Gastrocnemius medialis (tissue), 4 donors: ENCODE measurements at regions of chrX and their contacts with region 1.

Region 1: DNA sequence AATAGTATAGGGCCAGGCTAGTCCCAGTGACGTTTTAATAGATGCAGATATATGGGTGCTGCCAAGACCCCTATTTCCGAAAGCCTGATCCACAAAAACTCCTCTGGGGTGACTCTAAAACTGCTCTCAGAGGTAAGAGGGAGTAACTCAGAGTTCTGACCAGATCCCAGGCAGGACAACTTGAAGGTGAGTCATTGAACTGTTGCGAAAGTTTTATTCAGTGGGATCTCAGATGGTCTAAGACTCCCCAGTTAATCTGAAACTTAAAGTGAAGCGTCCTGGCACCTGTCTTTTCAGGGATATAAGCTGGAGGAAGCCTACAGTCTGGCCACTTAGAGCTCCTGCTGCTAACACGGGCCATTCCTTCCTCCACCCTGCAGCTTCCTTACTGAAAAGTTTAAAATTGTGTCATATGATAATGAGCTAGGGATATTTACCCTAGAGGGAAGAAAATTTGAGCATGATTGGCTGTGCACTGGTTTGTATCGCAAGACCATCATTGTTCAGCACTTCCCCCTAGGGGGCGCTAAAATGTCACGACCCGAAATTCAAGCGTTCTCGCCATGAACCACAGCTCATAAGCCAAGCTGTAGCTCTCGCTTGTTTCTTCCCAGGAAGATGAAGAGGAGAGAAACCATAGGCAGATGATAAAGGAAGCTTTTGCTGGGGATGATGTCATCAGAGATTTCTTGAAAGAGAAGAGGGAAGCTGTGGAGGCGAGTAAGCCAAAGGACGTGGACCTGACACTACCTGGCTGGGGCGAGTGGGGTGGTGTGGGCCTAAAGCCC is 19.5 kb downstream of the UTP14A start:
- DNase-seq: peak; percentile 25 to 56
- ATAC-seq: peak; percentile 62 to 93
- H3K4me3 ChIP-seq: no peak overlapping the region
- H3K27ac ChIP-seq: no peak overlapping the region
- H3K4me1 ChIP-seq: no peaks in the 10 kb centered on the region
- H3K27me3 ChIP-seq: no peaks in the 10 kb centered on the region
- CTCF ChIP-seq: peak; percentile 32 to 68 (median 61)
- POLR2A ChIP-seq: no peak

Region 2: GRCh38 chrX:129945146-129945545 is 19.6 kb after region 1 on chrX:
- in situ Hi-C with region 1: no loop called
- intact Hi-C with region 1: no loop called
- DNase-seq: no peak
- ATAC-seq: no peak
- H3K4me3 ChIP-seq: no peak overlapping the region
- H3K27ac ChIP-seq: no peak overlapping the region
- H3K4me1 ChIP-seq: no peaks in the 10 kb centered on the region
- H3K27me3 ChIP-seq: no peaks in the 10 kb centered on the region
- CTCF ChIP-seq: no peak
- POLR2A ChIP-seq: no peak

Region 3: DNA sequence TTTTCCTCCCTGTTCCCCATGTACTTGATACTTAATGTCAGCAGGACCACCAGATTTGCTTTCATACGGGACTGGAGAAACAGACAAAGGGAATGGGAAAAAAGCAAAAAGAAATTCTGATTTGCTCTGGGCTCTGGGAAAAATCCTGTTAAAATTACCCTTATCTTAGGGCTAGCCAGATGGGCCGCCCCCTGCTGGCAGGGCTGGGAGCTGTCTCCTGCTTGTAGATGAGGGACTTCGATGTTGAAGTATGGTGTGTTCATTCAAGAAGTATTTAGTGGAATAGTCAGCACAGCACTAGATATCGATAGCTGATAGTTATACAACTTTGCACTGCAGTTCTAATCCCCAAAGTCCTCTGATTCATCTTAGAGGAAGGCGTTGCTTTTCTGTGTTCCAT is 102.7 kb after region 1 on chrX:
- in situ Hi-C with region 1: no loop called
- intact Hi-C with region 1: loop called (anchors 1 kb)
- DNase-seq: peak in 1 of 2 donors; percentile 19
- ATAC-seq: peak in 1 of 2 donors; percentile 49
- H3K4me3 ChIP-seq: no peak overlapping the region
- H3K27ac ChIP-seq: no peak overlapping the region
- H3K4me1 ChIP-seq: no peaks in the 10 kb centered on the region
- H3K27me3 ChIP-seq: no peaks in the 10 kb centered on the region
- CTCF ChIP-seq: peak; percentile 46 to 77 (median 52)
- POLR2A ChIP-seq: no peak

Region 4: DNA sequence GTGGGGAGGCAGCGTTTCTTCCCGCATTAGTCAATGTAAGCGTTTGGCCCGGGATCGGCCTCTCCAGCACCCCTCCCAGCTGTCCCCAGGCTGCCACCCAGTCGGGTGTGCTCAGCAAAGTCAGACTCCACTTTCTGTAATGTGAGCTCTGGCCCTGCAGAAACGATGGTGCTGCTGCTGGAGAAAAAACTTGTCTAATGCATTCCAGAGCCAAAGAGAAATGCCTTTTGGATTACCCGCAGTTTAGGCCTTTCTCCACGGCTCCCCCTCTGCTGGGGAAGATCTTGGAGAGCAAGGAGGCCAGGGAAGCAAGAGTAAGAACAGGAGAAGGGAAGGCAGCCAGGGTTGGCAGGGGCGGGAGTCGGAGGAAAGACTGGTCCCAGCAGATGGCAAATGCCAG is 129.6 kb after region 1 on chrX:
- in situ Hi-C with region 1: loop called (anchors 10 kb)
- intact Hi-C with region 1: loop called (anchors 1 kb)
- DNase-seq: peak in 1 of 2 donors; percentile 21
- ATAC-seq: peak; percentile 39 to 63
- H3K4me3 ChIP-seq: no peak overlapping the region
- H3K27ac ChIP-seq: peak overlapping the region in 1 of 4 donors; percentile 31
- H3K4me1 ChIP-seq: peaks cover 0 to 9% of the 10 kb centered on the region in 2 donors
- H3K27me3 ChIP-seq: no peaks in the 10 kb centered on the region
- CTCF ChIP-seq: no peak
- POLR2A ChIP-seq: no peak

Region 5: GRCh38 chrX:130060122-130061069 is 134.9 kb after region 1 on chrX:
- in situ Hi-C with region 1: loop called (anchors 10 kb)
- intact Hi-C with region 1: loop called (anchors 1 kb)
- DNase-seq: peak; percentile 45 to 65
- ATAC-seq: peak; percentile 91 to 94
- H3K4me3 ChIP-seq: peak overlapping the region; percentile 56 to 70 (median 58)
- H3K27ac ChIP-seq: peak overlapping the region; percentile 64 to 76 (median 68)
- H3K4me1 ChIP-seq: peaks cover 0 to 6% of the 10 kb centered on the region in 2 donors
- H3K27me3 ChIP-seq: no peaks in the 10 kb centered on the region
- CTCF ChIP-seq: peak; percentile 80 to 92 (median 88)
- POLR2A ChIP-seq: no peak